ENCODE measurements at regions of chr11 and their contacts with region 1.

Region 1: DNA sequence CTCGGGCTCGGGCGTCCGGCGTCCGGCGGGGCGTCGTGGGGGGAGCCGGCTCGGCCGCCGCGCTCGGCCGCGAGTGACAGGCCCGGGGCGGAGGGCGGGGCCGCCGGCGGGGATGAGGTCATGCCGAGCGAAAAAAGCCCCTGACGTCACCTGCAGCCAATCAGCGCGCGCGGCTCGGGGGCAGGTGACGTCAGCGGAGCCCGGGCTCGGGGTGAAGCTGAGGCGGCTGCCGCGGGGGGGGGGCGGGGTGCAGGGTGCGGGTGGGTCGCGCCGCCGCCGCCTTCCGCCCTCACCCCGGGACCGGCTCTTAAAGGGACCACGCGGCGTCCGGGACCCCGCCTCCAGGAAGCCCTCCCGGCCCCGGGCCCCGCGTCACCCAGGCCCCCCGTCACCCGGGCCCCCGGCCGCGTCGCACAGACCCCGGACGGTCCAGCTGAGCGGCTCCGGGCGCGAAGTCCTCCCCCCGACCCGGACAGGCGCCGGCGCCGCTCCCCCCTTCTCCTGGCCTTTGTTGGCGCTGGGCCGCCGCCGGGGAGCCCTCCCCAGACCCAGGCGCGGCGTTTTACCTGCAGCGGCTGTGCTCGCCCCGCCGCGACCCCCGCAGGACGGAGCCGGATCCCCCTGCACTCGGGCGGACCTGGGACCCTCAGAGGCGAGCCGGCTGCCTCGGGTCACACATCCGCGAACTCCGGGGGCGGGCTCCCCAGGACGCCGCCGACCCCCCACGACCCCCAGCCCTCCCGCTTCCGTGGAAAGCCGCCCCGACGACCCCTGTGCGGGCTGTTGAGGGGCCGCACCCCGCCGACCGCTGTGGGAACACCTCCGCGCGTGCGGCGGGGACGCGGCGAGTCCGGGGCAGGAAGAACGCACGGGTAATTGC is at the start of gene DUSP8:
- DNase-seq: peak; percentile 56 to 84 (median 83)
- H3K4me3 ChIP-seq: peak within 1 kb of the TSS; percentile 54
- H3K27ac ChIP-seq: peak within 1 kb of the TSS in 1 of 2 donors; percentile 52
- H3K4me1 ChIP-seq: no peaks in the 10 kb centered on the region
- H3K27me3 ChIP-seq: no peaks in the 10 kb centered on the region
- CTCF ChIP-seq: no peak
- EP300 ChIP-seq: no peak
- POLR2A ChIP-seq: no peak
- total RNA-seq, gene DUSP8: 0.38 to 14.9 (median 1.3) TPM

Region 2: GRCh38 chr11:1202776-1203504 is 369.5 kb before region 1 on chr11:
- intact Hi-C with region 1: loop called in 3 of 4 experiments (anchors 2 to 10 kb)
- DNase-seq: peak in 4 of 5 donors; percentile 53 to 75 (median 68)
- H3K4me3 ChIP-seq: no peak overlapping the region
- H3K27ac ChIP-seq: no peak overlapping the region
- H3K4me1 ChIP-seq: no peaks in the 10 kb centered on the region
- H3K27me3 ChIP-seq: no peaks in the 10 kb centered on the region
- CTCF ChIP-seq: peak; percentile 74 to 86 (median 78)
- EP300 ChIP-seq: no peak
- POLR2A ChIP-seq: no peak

Region 3: GRCh38 chr11:1458340-1459218 is 113.9 kb before region 1 on chr11:
- intact Hi-C with region 1: loop called in 1 of 4 experiments (anchors 1 kb)
- DNase-seq: peak; percentile 85 to 93 (median 86)
- H3K4me3 ChIP-seq: no peak overlapping the region
- H3K27ac ChIP-seq: peak overlapping the region; percentile 80 to 92
- H3K4me1 ChIP-seq: peaks cover 19% of the 10 kb centered on the region
- H3K27me3 ChIP-seq: no peaks in the 10 kb centered on the region
- CTCF ChIP-seq: peak in 2 of 3 donors; percentile 15 to 25
- EP300 ChIP-seq: no peak
- POLR2A ChIP-seq: no peak

Region 4: DNA sequence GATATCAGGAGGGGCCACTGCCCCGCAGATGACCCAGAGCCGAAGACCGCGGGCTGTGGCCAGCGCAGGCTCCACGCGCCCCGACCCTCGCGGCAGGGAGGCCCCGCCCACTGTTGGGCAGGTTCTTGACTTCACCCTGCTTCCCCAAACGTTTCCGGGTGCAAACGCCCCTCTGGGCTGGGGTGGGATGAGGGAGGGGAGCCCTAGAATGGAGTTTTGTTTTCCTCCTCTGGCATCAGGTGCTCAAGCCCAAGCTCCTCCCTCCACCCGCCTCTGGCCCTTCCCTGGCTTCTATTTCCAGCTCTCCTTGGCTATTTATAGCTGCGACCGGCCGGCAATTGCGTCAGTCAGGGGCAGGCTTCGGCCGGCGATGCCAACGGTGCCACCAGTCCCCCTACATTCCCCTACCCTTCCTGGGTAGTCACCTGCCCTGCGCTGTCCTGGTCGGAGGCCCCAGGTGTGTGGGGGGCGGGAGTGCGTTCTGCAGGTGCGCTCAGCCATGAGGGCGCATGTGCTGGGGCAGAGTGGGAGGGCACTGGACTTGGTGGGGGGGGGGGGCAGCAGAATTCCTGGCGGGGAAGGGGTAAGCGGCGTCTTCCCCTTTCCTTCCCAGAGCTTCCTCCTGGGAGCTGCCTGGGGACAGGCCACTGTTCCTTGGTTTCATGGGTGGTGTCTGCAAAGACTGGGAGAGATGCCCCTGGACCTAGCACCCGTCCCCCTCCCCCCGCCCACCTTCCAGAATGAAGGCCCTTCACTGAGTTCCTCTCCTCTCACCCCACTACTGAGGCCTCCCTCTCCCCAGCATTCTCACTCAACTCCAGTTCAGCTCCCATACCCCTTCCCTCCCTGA is 24.0 kb before region 1 on chr11:
- intact Hi-C with region 1: loop called in 1 of 4 experiments (anchors 1 kb)
- DNase-seq: peak; percentile 32 to 62 (median 56)
- H3K4me3 ChIP-seq: peak overlapping the region; percentile 16
- H3K27ac ChIP-seq: peak overlapping the region in 1 of 2 donors; percentile 52
- H3K4me1 ChIP-seq: peaks cover 2% of the 10 kb centered on the region
- H3K27me3 ChIP-seq: peaks cover 6% of the 10 kb centered on the region
- CTCF ChIP-seq: no peak
- EP300 ChIP-seq: no peak
- POLR2A ChIP-seq: no peak

Region 5: GRCh38 chr11:1559119-1559951 is 13.1 kb before region 1 on chr11:
- intact Hi-C with region 1: loop called in 1 of 4 experiments (anchors 2 kb)
- DNase-seq: peak in 4 of 5 donors; percentile 54 to 67 (median 61)
- H3K4me3 ChIP-seq: no peak overlapping the region
- H3K27ac ChIP-seq: peak overlapping the region; percentile 46 to 69
- H3K4me1 ChIP-seq: peaks cover 6% of the 10 kb centered on the region
- H3K27me3 ChIP-seq: no peaks in the 10 kb centered on the region
- CTCF ChIP-seq: no peak
- EP300 ChIP-seq: no peak
- POLR2A ChIP-seq: no peak